ENCODE measurements at regions of chr17 and their contacts with region 1.

Region 1: DNA sequence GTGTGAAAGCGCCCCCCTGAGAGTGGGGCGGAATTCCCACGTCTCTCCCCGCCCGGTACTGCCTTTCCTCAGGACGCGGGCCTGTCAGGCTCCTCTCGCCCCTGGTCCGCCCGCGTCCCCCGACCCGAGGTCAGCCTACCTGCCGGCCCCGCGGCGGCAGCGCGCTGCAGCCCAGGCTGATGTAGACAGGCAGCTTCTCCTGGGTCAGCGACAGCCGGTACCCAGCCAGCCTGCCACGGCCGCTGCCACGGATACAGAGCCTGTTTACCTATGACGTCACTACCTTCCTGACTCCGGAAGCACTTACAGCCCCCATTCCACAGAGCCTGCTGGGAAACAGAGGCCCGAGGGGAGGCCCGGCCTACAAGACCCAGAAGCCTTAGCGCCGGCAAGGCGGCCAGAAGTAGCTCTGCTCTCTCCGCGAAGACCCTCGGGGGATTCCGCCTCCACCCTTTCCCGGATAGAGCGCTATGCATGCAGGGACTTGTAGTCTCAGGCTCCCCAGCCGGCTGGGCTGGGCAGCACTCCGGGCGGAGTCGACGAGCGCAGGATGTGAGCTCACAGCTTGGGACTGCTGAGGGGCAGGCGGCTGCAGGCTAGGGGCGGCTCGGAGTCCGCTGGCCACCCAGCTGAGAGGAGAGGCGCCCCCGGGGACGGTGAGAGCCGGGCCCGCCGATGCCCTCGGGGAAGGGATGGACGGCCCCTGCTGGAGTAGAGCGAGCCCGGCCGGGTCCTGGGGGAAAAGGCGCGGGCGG is at the starts of genes IFT20 and TNFAIP1:
- DNase-seq: peak; percentile 99
- H3K4me3 Mint-ChIP-seq: peak within 1 kb of the TSS; percentile 97
- H3K27ac Mint-ChIP-seq: peak within 1 kb of the TSS; percentile 96
- H3K4me1 Mint-ChIP-seq: peaks cover 34% of the 10 kb centered on the region
- H3K27me3 Mint-ChIP-seq: no peaks in the 10 kb centered on the region
- total RNA-seq, gene IFT20: 21.1 and 24.7 TPM in 2 replicates
- total RNA-seq, gene TNFAIP1: 30.8 and 32.7 TPM in 2 replicates

Region 2: DNA sequence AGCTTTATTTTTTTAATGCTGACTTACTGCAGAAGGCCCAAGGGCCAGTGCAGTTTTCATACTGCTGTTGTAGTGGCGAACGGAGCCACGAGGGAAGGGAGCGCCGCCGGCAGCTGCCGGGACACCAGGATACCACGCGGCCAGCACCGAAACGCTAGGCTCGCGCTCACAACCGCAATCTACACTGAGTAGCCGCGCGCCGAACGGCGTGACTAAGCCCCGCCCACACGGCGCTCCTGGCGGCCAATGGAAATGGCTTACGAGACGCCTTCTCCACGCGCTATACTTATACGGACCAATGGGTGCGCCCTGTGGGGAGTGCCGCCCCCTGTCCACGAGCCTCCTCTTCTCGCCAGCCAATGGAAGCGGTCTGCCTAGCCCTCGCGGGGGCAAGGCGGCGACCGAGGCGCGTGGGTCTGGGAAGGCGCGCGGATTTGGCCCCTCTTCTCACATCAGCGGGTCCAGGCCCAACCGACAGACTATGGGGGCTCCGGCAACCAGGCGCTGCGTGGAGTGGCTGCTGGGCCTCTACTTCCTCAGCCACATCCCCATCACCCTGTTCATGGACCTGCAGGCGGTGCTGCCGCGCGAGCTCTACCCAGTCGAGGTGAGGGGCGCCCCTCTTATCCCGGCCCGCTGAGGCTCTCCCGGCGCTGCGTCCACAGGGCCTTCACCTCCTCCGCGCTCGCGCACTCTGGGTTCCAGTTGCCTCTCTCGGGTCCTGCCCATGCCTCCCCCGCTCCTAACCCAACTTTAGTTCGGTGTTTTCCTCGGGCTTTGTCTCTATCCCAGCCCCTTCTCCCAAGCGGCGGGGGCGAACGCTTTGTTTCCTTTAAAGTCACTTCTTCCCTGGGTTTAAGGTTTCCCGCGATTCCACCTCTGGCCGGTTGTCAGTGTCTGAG is 16.4 kb before region 1 on chr17 and contains the start of gene TMEM97:
- intact Hi-C with region 1: loop called (anchors 1 kb)
- DNase-seq: peak; percentile 99
- H3K4me3 Mint-ChIP-seq: peak within 1 kb of the TSS; percentile 97
- H3K27ac Mint-ChIP-seq: peak within 1 kb of the TSS; percentile 96
- H3K4me1 Mint-ChIP-seq: peaks cover 34% of the 10 kb centered on the region
- H3K27me3 Mint-ChIP-seq: peaks cover 2% of the 10 kb centered on the region
- total RNA-seq, gene TMEM97: 64.6 and 69.0 TPM in 2 replicates

Region 3: DNA sequence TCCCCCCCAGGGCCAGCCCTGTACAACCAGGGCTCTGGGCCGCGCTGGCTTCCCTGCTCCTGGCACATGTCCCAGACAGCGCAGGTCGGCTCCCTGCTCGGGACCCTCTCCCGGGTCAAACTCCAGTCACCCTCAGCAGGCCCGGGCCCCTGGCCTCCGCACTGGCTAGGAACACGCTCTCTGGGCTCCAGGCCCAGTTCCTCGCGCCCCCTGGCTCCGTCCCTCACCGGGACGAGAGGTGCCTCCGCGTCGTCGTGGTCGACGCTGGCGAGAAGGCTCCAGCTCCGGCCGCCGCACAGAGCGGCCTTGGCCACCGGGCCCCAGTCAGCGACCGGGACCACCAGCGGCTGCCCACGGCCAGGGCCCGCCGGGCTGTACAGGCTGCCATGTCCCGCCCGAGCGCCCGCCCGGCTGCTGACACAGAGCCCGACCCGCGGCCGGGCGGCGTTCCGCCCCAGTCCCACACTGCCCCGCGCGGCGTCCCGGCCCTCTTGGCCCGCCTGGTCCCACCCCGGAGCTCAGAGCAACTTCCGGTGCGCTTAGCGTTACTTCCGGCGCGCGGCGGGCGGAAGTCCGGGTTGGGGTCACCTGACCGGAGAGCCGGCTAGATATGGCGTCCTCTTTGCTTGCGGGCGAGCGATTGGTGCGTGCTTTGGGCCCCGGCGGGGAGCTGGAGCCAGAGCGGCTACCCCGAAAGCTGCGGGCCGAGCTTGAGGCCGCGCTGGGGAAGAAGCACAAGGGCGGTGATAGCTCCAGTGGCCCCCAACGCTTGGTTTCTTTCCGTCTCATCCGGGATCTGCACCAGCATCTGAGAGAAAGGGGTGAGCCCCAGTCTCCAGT is 21.9 kb after region 1 on chr17 and contains the start of gene POLDIP2:
- intact Hi-C with region 1: loop called (anchors 1 kb)
- DNase-seq: peak; percentile 99
- H3K4me3 Mint-ChIP-seq: peak within 1 kb of the TSS; percentile 90
- H3K27ac Mint-ChIP-seq: peak within 1 kb of the TSS; percentile 93
- H3K4me1 Mint-ChIP-seq: peaks cover 19% of the 10 kb centered on the region
- H3K27me3 Mint-ChIP-seq: no peaks in the 10 kb centered on the region
- total RNA-seq, gene POLDIP2: 112 and 115 TPM in 2 replicates

Region 4: GRCh38 chr17:28371245-28372202 is 36.1 kb after region 1 on chr17 and contains the start of gene SARM1:
- intact Hi-C with region 1: loop called (anchors 1 kb)
- DNase-seq: peak; percentile 96
- H3K4me3 Mint-ChIP-seq: peak within 1 kb of the TSS; percentile 85
- H3K27ac Mint-ChIP-seq: peak within 1 kb of the TSS; percentile 91
- H3K4me1 Mint-ChIP-seq: peaks cover 21% of the 10 kb centered on the region
- H3K27me3 Mint-ChIP-seq: no peaks in the 10 kb centered on the region
- total RNA-seq, gene SARM1: 36.4 and 37.7 TPM in 2 replicates

Region 5: GRCh38 chr17:28623696-28624095 is 288.3 kb after region 1 on chr17:
- intact Hi-C with region 1: no loop called
- DNase-seq: no peak
- H3K4me3 Mint-ChIP-seq: no peak overlapping the region
- H3K27ac Mint-ChIP-seq: no peak overlapping the region
- H3K4me1 Mint-ChIP-seq: peaks cover 8% of the 10 kb centered on the region
- H3K27me3 Mint-ChIP-seq: no peaks in the 10 kb centered on the region

Measured in activated CD4-positive, alpha-beta T cell treated with anti-CD3 and anti-CD28 coated beads, Interleukin-2, amount 10 ng/mL, durations not matched to agents 24 days and 14 days (primary cell).